ENCODE measurements at regions of chr13 and their contacts with region 1.

Region 1: DNA sequence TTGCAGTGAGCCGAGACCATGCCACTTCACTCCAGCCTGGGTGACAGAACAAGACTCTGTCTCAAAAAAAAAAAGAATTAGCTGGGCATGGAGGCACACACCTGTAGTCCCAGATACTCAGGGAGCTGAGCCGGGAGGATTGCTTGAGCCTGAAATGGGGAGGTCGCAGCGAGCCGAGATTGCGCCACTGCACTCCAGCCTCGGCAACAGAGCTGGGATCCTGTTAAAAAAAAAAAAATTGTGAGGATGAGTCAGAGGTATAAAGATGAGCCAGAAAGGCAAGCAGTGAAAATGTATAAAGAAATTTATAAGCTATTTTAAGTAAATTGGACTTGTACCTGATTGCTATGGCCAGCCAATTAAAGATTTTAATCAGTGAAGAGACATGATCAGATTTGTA is 21.1 kb downstream of the KBTBD6 start:
- DNase-seq: no peak
- H3K4me3 ChIP-seq: no peak overlapping the region
- H3K27me3 ChIP-seq: no peaks in the 10 kb centered on the region
- CTCF ChIP-seq: no peak

Region 2: DNA sequence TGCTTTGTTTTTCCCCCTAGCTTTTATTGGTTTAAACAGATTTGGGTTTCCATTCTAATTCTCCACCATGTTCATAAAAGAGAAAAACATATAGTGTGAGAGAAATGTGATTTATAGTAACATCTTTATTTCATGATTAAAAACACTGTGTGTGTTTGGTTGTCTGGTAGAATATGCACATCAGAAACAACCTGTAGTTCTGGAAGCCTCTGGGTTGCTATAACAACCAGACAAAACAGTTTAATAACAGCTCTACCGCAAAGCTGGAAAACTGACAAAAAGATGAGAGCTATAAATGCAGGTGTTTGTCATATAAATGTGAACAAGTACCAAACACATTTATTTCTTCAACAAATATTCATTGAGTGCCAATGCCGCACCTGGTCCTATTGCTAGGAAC is 11.4 kb after region 1 on chr13:
- CTCF ChIA-PET with region 1: no interaction called
- POLR2A ChIA-PET with region 1: interaction called, 17 read pairs
- DNase-seq: no peak
- H3K4me3 ChIP-seq: no peak overlapping the region
- H3K27me3 ChIP-seq: no peaks in the 10 kb centered on the region
- CTCF ChIP-seq: no peak